ENCODE measurements at regions of chr11 and their contacts with region 1.

Region 1: GRCh38 chr11:36492724-36493304 is 17.3 kb downstream of the TRAF6 start:
- DNase-seq: peak; percentile 63
- ATAC-seq: peak; percentile 71
- H3K4me3 ChIP-seq: no peak overlapping the region
- H3K27ac ChIP-seq: no peak overlapping the region
- H3K4me1 ChIP-seq: peaks cover 1% of the 10 kb centered on the region; the same call in 1 of the 2 replicates
- H3K27me3 ChIP-seq: no peaks in the 10 kb centered on the region
- CTCF ChIP-seq: peak; percentile 76
- POLR2A ChIP-seq: no peak
- RAD21 ChIP-seq: peak; percentile 82

Region 2: GRCh38 chr11:35735903-35736302 is 756.9 kb before region 1 on chr11:
- CTCF ChIA-PET with region 1: no interaction called
- POLR2A ChIA-PET with region 1: no interaction called
- dilution Hi-C with region 1: no loop called
- in situ Hi-C with region 1: loop called (anchors 10 kb)
- intact Hi-C with region 1: no loop called
- DNase-seq: no peak
- ATAC-seq: no peak
- H3K4me3 ChIP-seq: no peak overlapping the region
- H3K27ac ChIP-seq: no peak overlapping the region
- H3K4me1 ChIP-seq: no peaks in the 10 kb centered on the region
- H3K27me3 ChIP-seq: no peaks in the 10 kb centered on the region
- CTCF ChIP-seq: no peak
- POLR2A ChIP-seq: no peak
- RAD21 ChIP-seq: no peak

Region 3: GRCh38 chr11:35800970-35801953 is 691.6 kb before region 1 on chr11:
- CTCF ChIA-PET with region 1: no interaction called
- POLR2A ChIA-PET with region 1: no interaction called
- dilution Hi-C with region 1: no loop called
- in situ Hi-C with region 1: loop called (anchors 25 kb)
- intact Hi-C with region 1: no loop called
- DNase-seq: no peak
- ATAC-seq: no peak
- H3K4me3 ChIP-seq: no peak overlapping the region
- H3K27ac ChIP-seq: no peak overlapping the region
- H3K4me1 ChIP-seq: peaks cover 6% of the 10 kb centered on the region
- H3K27me3 ChIP-seq: no peaks in the 10 kb centered on the region
- CTCF ChIP-seq: no peak
- POLR2A ChIP-seq: no peak
- RAD21 ChIP-seq: no peak

Region 4: DNA sequence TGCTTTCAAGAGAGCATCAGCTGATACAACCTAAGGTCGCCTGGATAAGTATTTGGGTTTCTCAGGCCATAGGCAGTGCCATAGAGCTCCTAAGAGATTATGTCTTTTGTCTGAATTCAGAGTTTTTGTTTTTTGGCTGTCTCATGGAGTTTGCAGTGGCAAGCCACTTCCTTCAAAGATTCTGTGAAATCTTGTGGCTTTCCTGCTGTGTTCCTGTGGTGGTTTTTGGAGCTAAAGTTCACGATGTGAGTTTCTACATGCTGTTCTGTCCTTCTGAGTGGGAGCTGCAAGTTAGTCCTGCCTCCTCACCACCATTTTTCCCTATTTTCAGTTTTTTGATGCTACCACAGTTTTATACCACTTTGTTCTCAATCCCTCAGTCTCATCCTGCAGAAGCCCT is 315.0 kb before region 1 on chr11:
- CTCF ChIA-PET with region 1: no interaction called
- POLR2A ChIA-PET with region 1: no interaction called
- dilution Hi-C with region 1: no loop called
- in situ Hi-C with region 1: no loop called
- intact Hi-C with region 1: no loop called
- DNase-seq: no peak
- ATAC-seq: no peak
- H3K4me3 ChIP-seq: no peak overlapping the region
- H3K27ac ChIP-seq: no peak overlapping the region
- H3K4me1 ChIP-seq: no peaks in the 10 kb centered on the region
- H3K27me3 ChIP-seq: no peaks in the 10 kb centered on the region; the same call in 1 of the 2 replicates
- CTCF ChIP-seq: no peak
- POLR2A ChIP-seq: no peak
- RAD21 ChIP-seq: no peak

Region 5: DNA sequence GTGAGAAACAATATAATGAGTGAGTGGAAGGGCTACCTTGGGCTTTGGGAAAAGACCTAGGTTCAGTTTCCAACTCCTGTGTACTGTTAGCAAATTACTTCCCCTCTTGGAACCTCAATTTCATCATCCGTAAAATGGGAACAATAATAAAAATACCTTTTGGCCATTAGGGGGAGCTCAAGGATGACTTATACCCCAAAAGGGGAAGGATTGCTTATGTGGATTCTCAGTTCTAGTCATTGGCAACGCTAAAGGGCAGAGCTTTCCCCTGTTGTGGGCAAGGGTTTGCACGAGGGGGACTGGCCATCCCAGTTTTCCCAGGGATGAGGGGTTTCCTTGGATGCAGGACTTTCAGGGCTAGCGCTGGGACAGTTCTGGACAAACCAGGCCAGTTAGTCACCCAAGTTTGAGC is 200.5 kb before region 1 on chr11:
- CTCF ChIA-PET with region 1: interaction called, 16 read pairs
- POLR2A ChIA-PET with region 1: no interaction called
- dilution Hi-C with region 1: loop called (anchors 10 kb)
- in situ Hi-C with region 1: no loop called
- intact Hi-C with region 1: loop called (anchors 1 kb)
- DNase-seq: peak; percentile 47
- ATAC-seq: peak; percentile 47; the same call in 1 of the 2 replicates
- H3K4me3 ChIP-seq: no peak overlapping the region
- H3K27ac ChIP-seq: no peak overlapping the region
- H3K4me1 ChIP-seq: 0 out of 2 replicates have a peak, but pooled peaks cover 2% of the 10 kb centered on the region
- H3K27me3 ChIP-seq: no peaks in the 10 kb centered on the region
- CTCF ChIP-seq: peak; percentile 78
- POLR2A ChIP-seq: no peak
- RAD21 ChIP-seq: peak; percentile 87